ENCODE measurements at regions of chr15 and their contacts with region 1.

Region 1: GRCh38 chr15:75023181-75023871 is at the start of gene PPCDC:
- DNase-seq: peak; percentile 94
- ATAC-seq: peak; percentile 99
- H3K4me3 Mint-ChIP-seq: peak within 1 kb of the TSS; percentile 95
- H3K27ac Mint-ChIP-seq: peak within 1 kb of the TSS; percentile 95
- H3K4me1 Mint-ChIP-seq: peaks cover 19% of the 10 kb centered on the region
- H3K27me3 Mint-ChIP-seq: peaks cover 2% of the 10 kb centered on the region
- total RNA-seq, gene PPCDC: 16.0 to 16.7 TPM

Region 2: GRCh38 chr15:74826364-74826819 is 196.9 kb before region 1 on chr15 and contains the start of gene CPLX3:
- POLR2A ChIA-PET with region 1: no interaction called
- DNase-seq: peak; percentile 80
- ATAC-seq: peak; percentile 58
- H3K4me3 Mint-ChIP-seq: no peak within 1 kb of the TSS
- H3K27ac Mint-ChIP-seq: no peak within 1 kb of the TSS
- H3K4me1 Mint-ChIP-seq: no peaks in the 10 kb centered on the region
- H3K27me3 Mint-ChIP-seq: peaks cover 36% of the 10 kb centered on the region
- total RNA-seq, gene CPLX3: 0.17 to 0.28 TPM

Region 3: GRCh38 chr15:75042730-75043508 is 19.6 kb after region 1 on chr15:
- POLR2A ChIA-PET with region 1: interaction called, 16 read pairs
- DNase-seq: peak; percentile 84
- ATAC-seq: peak; percentile 91
- H3K4me3 Mint-ChIP-seq: peak overlapping the region; percentile 63
- H3K27ac Mint-ChIP-seq: peak overlapping the region; percentile 91
- H3K4me1 Mint-ChIP-seq: peaks cover 69% of the 10 kb centered on the region
- H3K27me3 Mint-ChIP-seq: no peaks in the 10 kb centered on the region